HAP-1 (cell line): ENCODE measurements at regions of chr17 and their contacts with region 1.

Region 1: DNA sequence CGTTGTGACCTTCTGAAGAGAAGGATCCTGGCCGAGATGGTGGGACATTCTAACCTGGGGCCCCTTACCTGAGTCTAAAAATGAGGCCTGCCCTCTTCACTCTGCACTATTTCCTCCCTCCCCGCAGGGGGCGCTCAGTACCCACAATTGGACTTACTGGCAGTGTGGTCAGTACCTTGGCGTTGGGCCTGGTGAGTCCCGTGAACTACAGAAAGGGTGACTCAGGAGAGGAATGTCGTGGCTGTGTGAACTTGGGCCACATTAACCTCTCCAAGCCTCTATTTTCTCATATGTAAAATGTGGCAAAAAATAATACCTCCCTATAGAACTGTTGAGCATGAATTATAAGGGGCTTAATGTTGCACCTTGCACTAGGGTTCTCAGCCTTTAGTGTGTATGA is 3.9 kb downstream of the RSAD1 start:
- DNase-seq: peak; percentile 64 to 90
- H3K4me3 ChIP-seq: no peak overlapping the region
- H3K4me1 ChIP-seq: peaks cover 6% of the 10 kb centered on the region; the same call in 1 of the 2 replicates
- H3K27me3 ChIP-seq: no peaks in the 10 kb centered on the region

Region 2: GRCh38 chr17:50626037-50626574 is 143.6 kb after region 1 on chr17:
- in situ Hi-C with region 1: loop called (anchors 10 kb)
- DNase-seq: peak; percentile 76 to 89
- H3K4me3 ChIP-seq: no peak overlapping the region
- H3K4me1 ChIP-seq: no peaks in the 10 kb centered on the region
- H3K27me3 ChIP-seq: peaks cover 4% of the 10 kb centered on the region